ENCODE measurements at regions of chr6 and their contacts with region 1.

Region 1: DNA sequence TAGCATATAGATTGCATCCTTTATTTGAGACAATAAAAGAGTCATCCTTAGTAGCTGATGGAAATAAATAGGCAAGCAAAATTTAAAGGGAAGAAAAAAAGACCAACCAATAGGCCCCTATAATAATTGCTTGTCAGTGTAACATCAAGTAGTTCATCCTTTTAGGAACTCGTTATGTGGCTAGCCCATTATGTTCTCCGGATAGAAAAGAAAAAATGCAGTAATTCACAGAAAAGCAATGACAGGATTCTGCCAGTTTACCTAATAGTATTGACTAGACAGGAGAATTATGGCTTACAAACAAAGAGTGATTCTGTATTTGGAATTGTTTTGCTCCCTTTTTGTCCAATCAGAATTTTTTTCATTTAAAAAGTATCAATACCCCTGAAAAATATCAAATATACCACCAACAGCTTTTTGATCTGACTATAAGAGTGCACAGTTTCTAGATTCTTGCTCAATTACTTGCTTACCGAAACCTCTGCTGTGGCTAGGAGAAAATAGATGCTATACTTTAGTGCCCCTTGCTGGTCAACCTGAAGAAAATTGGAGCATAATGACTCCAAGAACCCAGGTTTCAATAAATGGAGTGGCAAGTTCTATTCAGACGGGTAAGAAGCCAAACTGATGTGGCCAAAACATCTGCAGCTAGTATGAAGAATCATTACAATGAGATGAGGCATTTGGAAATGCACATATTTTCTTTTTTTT is 91.5 kb upstream of the SASH1 start:
- DNase-seq: no peak
- H3K4me3 Mint-ChIP-seq: no peak overlapping the region
- H3K27ac Mint-ChIP-seq: no peak overlapping the region
- H3K4me1 Mint-ChIP-seq: no peaks in the 10 kb centered on the region
- H3K27me3 Mint-ChIP-seq: no peaks in the 10 kb centered on the region
- CTCF ChIP-seq: no peak

Region 2: GRCh38 chr6:148177589-148178233 is 73.4 kb before region 1 on chr6:
- CTCF ChIA-PET with region 1: interaction called, 6 read pairs
- intact Hi-C with region 1: loop called (anchors 1 kb)
- DNase-seq: peak; percentile 57
- H3K4me3 Mint-ChIP-seq: no peak overlapping the region
- H3K27ac Mint-ChIP-seq: no peak overlapping the region
- H3K4me1 Mint-ChIP-seq: no peaks in the 10 kb centered on the region
- H3K27me3 Mint-ChIP-seq: no peaks in the 10 kb centered on the region
- CTCF ChIP-seq: peak; percentile 77

Region 3: DNA sequence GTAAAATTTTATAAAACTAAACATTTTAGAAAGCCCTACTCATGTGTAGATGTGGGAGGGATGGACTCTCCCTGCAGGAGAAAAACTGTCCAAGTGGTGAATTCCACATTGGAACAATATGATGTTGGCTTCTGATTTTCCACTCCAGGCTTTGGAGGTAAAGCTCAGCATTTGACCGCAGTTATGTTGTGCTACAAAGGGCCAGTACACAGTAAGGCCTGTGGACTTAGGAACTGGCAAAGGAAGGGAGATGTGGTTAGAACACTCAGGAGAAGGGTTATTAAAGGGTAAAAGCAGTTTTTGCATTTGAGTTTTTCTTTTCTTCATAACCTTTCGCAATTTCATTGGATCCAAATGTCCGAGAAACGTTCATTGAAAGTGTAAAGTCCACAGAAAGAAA is 58.8 kb before region 1 on chr6:
- CTCF ChIA-PET with region 1: no interaction called
- intact Hi-C with region 1: loop called (anchors 5 kb)
- DNase-seq: no peak
- H3K4me3 Mint-ChIP-seq: no peak overlapping the region
- H3K27ac Mint-ChIP-seq: peak overlapping the region; percentile 54
- H3K4me1 Mint-ChIP-seq: peaks cover 13% of the 10 kb centered on the region
- H3K27me3 Mint-ChIP-seq: no peaks in the 10 kb centered on the region
- CTCF ChIP-seq: no peak